Gastrocnemius medialis (tissue), 4 donors: ENCODE measurements at regions of chr15 and their contacts with region 1.

Region 1: DNA sequence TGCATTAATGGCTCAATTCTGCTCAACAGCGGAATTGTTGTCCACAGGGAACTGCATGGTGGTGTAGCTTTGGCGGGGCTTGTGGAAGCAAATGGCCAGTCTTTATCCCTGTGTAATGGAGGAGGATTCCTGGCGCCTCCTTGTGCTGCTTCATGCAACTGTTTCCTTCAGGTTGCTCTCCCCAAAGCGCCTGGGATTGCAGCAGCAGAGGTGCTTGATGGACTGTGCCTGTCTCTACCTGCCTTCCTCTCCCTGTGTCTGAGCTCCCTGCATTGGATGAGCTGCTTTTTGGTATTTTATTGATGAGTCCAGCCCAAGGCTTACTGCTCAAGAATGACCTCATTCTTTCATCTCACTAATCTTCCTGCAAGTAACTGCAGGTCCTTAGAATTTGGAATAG is 72.9 kb upstream of the NDN start:
- DNase-seq: no peak
- ATAC-seq: no peak
- H3K4me3 ChIP-seq: no peak overlapping the region
- H3K27ac ChIP-seq: no peak overlapping the region
- H3K4me1 ChIP-seq: no peaks in the 10 kb centered on the region
- H3K27me3 ChIP-seq: no peaks in the 10 kb centered on the region
- CTCF ChIP-seq: no peak
- POLR2A ChIP-seq: no peak

Region 2: DNA sequence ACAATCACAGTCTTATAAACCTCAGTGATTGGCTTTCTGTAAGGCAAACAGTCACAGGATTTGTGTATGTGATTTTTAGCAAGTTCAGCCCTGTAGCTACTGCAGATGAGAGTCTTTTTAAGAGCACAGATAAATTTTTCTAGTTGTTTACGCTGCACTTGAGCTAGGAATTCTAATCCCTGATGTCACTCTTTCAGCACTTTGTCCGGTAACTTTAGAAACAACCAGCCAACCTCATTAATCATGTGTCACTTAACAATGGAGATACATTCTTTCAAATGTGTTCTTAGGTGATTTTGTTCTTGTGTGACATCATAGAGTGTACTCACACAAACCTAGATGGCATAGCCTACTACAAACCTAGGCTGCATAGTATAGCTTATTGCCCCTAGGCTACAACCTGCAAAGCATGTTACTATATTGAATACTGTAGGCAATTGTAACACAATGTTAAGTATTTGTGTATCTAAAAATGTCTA is 276.2 kb before region 1 on chr15:
- in situ Hi-C with region 1: no loop called
- intact Hi-C with region 1: no loop called
- DNase-seq: no peak
- ATAC-seq: no peak
- H3K4me3 ChIP-seq: no peak overlapping the region
- H3K27ac ChIP-seq: no peak overlapping the region
- H3K4me1 ChIP-seq: no peaks in the 10 kb centered on the region
- H3K27me3 ChIP-seq: no peaks in the 10 kb centered on the region
- CTCF ChIP-seq: no peak
- POLR2A ChIP-seq: no peak

Region 3: DNA sequence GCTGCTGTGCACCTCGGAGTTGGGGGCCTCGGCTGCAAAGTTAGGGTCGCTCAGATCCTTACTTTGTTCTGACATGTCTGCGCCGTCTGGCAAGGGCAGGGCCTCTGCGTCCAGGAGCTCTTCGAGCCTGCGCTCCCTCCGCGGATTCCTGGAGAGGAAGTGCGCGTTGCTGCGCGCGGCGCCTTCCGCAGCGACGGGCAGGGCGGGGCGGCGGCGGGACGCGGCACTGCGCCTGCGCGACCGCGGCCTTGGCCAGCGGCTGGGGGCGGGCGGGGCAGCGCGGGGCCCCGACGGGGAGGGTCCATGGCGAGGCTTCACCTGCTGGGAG is 72.9 kb before region 1 on chr15 and contains the start of gene NDN:
- in situ Hi-C with region 1: no loop called
- intact Hi-C with region 1: no loop called
- DNase-seq: no peak
- ATAC-seq: peak in 1 of 2 donors; percentile 40
- H3K4me3 ChIP-seq: peak within 1 kb of the TSS; percentile 21 to 45 (median 41)
- H3K27ac ChIP-seq: no peak within 1 kb of the TSS
- H3K4me1 ChIP-seq: no peaks in the 10 kb centered on the region
- H3K27me3 ChIP-seq: no peaks in the 10 kb centered on the region
- CTCF ChIP-seq: no peak
- POLR2A ChIP-seq: no peak
- total RNA-seq, gene NDN: 8.9 to 12.4 (median 12.2) TPM

Region 4: DNA sequence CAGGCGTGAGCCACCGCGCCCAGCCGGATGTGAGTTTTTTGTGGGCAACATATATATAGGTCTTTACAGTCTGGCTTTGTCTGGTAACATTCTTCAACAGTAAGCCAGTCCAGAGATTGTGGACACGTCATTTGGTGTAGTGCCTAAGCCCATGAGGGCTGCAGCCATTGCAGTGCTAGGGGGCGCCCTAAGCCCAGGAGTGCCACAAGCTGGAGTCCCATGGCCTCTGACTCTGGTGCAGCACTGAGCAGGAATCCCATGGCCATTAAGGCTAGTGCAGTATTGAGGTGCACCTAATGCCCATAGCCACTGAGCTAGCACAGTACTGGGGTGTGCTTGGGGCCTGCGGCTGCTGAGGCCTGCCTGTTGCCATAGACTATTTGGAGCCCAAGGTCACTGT is 63.5 kb after region 1 on chr15:
- in situ Hi-C with region 1: loop called in 1 of 4 experiments (anchors 10 kb)
- intact Hi-C with region 1: no loop called
- DNase-seq: no peak
- ATAC-seq: no peak
- H3K4me3 ChIP-seq: no peak overlapping the region
- H3K27ac ChIP-seq: no peak overlapping the region
- H3K4me1 ChIP-seq: no peaks in the 10 kb centered on the region
- H3K27me3 ChIP-seq: no peaks in the 10 kb centered on the region
- CTCF ChIP-seq: no peak
- POLR2A ChIP-seq: no peak